ENCODE measurements at regions of chr14 and their contacts with region 1.

Region 1: DNA sequence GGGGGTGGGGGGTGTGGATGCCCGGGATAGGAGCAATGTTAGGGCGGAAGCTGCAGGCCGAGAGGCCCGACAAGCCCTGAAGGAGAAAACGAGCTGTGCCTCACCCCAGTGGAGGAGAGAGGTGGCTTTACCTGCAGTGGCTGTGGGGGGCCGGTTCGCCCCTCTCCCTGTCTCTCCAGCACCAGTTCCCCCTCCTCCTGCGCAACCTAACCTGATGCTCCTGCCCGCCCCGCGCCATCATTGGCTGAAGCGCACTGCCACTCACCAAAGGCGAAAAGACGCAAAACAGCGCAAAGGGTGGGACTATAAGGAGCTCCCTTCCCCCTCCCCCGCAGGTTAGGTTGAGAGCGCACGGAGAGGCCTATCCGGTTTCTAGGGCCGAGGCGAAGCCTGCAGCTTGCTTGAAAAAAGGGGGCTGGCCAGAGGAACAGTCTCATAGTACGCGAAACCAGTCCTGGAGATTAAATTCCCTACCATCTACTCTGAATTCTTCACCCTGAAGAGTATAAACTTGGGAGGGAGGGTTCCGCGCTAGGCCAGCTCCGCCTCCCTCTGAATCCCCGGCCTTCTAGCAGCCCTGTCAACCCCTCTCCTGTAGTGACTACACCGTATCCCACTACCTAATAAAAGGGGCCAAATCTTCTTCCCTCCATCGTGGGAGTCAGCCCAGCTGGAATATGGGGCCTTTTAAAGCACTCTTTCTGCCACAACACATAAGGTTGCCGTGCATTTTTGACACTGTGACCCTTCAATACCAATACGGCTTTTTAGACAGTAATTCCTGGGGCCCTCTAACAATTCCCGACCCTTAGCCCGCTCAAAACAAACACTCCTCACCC is 18.6 kb downstream of the CHD8 start:
- DNase-seq: peak; percentile 99
- ATAC-seq: peak; percentile 99
- H3K4me3 Mint-ChIP-seq: peak overlapping the region; percentile 85
- H3K27ac Mint-ChIP-seq: peak overlapping the region; percentile 83
- H3K4me1 Mint-ChIP-seq: peaks cover 40% of the 10 kb centered on the region
- H3K27me3 Mint-ChIP-seq: no peaks in the 10 kb centered on the region

Region 2: DNA sequence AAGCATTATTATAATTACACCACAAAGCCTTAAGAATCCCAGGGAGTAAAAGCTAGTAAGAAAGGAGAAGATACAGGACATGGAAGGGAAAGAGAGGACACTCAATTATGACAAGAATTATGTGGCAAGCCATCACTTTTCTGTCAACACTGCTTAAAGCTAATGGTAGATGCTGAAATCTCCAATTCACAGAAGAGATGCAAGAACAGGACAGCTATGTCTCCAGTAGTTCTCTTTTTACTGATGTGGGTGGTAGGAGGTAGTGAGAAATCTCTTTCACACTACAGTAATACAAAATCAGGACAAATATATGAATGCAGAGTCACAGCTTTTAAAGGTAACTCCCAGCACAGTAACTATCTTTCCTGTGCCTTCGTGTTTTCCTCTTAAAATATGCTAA is 10.6 kb before region 1 on chr14:
- CTCF ChIA-PET with region 1: no interaction called
- POLR2A ChIA-PET with region 1: interaction called, 10 read pairs
- DNase-seq: no peak
- ATAC-seq: no peak
- H3K4me3 Mint-ChIP-seq: no peak overlapping the region
- H3K27ac Mint-ChIP-seq: no peak overlapping the region
- H3K4me1 Mint-ChIP-seq: peaks cover 4% of the 10 kb centered on the region
- H3K27me3 Mint-ChIP-seq: no peaks in the 10 kb centered on the region

Region 3: DNA sequence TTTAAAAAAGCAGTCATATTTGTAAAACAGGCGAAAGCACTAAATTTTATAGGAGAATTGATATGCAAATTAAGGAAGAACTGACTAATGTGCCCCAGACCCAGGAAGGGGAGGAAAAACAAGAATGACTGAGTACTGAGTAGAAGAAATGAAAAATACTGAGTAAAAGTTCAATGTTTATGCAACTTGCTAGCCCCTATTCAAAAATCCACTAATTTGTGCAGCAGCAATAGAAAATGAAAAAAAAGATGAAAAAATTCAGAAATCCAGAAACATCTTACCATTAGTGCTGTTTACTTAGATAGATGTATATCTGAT is 12.6 kb after region 1 on chr14:
- CTCF ChIA-PET with region 1: interaction called, 45 read pairs
- POLR2A ChIA-PET with region 1: interaction called, 65 read pairs
- DNase-seq: no peak
- ATAC-seq: no peak
- H3K4me3 Mint-ChIP-seq: no peak overlapping the region
- H3K27ac Mint-ChIP-seq: peak overlapping the region; percentile 27
- H3K4me1 Mint-ChIP-seq: peaks cover 48% of the 10 kb centered on the region
- H3K27me3 Mint-ChIP-seq: no peaks in the 10 kb centered on the region

Region 4: DNA sequence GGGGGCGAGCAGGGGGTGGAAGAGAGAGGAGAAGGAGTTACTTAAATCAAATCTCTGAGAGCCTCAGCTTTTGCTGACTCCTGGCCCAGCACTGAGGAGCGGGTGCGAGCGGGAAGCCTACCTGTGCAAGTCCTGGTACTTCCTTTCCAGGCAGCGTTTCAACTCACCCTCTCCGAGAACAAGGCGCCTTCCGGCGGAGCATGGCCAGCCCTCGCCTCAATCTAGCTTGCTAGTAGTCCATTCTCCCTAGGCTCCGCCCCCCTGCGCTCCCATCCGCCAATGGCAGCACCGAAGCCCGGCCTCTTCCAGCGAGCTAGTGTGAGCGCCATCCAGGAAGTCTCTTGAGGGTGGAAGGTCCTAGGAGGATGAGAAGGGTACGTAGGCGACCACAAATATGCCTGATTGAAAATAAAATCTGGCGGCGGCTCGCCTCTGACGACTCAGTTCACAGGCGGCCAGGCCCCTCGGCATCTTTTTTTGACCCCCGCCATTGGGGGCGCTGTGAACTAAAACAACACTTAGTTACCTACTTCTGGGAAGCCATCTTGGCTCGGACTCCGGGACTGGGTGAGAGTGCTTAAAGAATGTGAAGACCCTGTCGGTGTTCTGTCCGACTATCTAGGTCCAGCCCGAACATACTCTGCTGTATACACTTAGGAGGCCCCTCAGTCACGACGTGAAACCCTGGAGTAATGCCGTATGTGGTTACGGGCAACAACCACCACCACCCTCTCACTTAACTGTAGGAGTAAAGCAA is 18.8 kb after region 1 on chr14 and contains the start of gene CHD8:
- CTCF ChIA-PET with region 1: interaction called, 45 read pairs
- POLR2A ChIA-PET with region 1: interaction called, 65 read pairs
- DNase-seq: peak; percentile 100
- ATAC-seq: peak; percentile 99
- H3K4me3 Mint-ChIP-seq: peak within 1 kb of the TSS; percentile 95
- H3K27ac Mint-ChIP-seq: peak within 1 kb of the TSS; percentile 98
- H3K4me1 Mint-ChIP-seq: peaks cover 32% of the 10 kb centered on the region
- H3K27me3 Mint-ChIP-seq: no peaks in the 10 kb centered on the region
- total RNA-seq, gene CHD8: 116 to 119 TPM